Activated CD4-positive, alpha-beta memory T cell treated with anti-CD3 and anti-CD28 coated beads, Interleukin-2, amount 10 ng/mL, durations not matched to agents 7 days and 5 days (primary cell): ENCODE measurements at regions of chr1 and their contacts with region 1.

Region 1: GRCh38 chr1:119948342-119949214 is 52.3 kb upstream of the ADAM30 start:
- DNase-seq: peak; percentile 80
- H3K4me3 Mint-ChIP-seq: no peak overlapping the region
- H3K27ac Mint-ChIP-seq: no peak overlapping the region
- H3K4me1 Mint-ChIP-seq: peaks cover 3% of the 10 kb centered on the region
- H3K27me3 Mint-ChIP-seq: no peaks in the 10 kb centered on the region

Region 2: GRCh38 chr1:119968068-119968492 is 19.5 kb after region 1 on chr1:
- CTCF ChIA-PET with region 1: interaction called, 13 read pairs
- POLR2A ChIA-PET with region 1: no interaction called
- DNase-seq: peak; percentile 85
- H3K4me3 Mint-ChIP-seq: no peak overlapping the region
- H3K27ac Mint-ChIP-seq: peak overlapping the region; percentile 61
- H3K4me1 Mint-ChIP-seq: peaks cover 14% of the 10 kb centered on the region
- H3K27me3 Mint-ChIP-seq: no peaks in the 10 kb centered on the region